ENCODE measurements at regions of chr18 and their contacts with region 1.

Region 1: GRCh38 chr18:3885209-3885792 is 435.3 kb downstream of the TGIF1 start:
- DNase-seq: no peak

Region 2: GRCh38 chr18:3952031-3952430 is 66.7 kb after region 1 on chr18:
- in situ Hi-C with region 1: no loop called
- DNase-seq: no peak

Region 3: GRCh38 chr18:3995476-3996102 is 110.3 kb after region 1 on chr18:
- in situ Hi-C with region 1: loop called (anchors 25 kb)
- DNase-seq: peak; percentile 88

Measured in G401 (cell line).